ENCODE measurements at regions of chr15 and their contacts with region 1.

Region 1: GRCh38 chr15:70569091-70569621 is 194.2 kb downstream of the UACA start:
- DNase-seq: no peak
- ATAC-seq: peak; percentile 84

Region 2: DNA sequence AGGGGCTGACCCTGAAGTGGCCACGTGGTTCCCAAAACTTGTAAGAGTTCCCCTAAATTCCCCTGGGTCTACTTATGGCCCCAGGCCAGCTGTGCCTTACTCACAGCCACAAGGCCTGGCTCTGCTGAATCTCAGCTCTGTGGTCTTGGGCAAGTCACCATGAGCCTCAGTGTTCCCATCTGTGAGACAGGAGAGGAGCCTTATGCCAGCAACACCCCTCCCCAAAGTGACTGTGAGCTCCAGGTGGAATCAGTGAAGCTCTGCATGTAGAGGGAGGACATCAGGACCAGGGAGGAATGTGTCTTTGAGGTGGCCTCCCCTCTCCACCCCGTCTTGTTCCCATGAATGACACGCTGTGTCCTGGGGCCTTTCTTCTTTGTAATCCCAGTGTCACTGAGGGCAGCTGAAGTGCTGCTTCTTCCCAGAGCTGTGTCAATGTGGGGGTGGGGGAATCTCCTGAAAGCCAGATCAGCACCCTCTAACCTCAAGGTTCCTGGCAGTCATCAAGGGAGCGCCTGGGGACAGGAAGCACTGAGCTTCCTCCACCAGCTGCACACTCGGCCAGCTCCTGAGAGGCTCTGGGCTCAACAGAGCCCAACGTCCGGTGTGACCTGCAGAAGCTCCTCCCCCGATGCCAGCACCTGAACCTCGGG is 64.7 kb before region 1 on chr15:
- intact Hi-C with region 1: no loop called
- DNase-seq: peak; percentile 82
- ATAC-seq: peak; percentile 75

Region 3: DNA sequence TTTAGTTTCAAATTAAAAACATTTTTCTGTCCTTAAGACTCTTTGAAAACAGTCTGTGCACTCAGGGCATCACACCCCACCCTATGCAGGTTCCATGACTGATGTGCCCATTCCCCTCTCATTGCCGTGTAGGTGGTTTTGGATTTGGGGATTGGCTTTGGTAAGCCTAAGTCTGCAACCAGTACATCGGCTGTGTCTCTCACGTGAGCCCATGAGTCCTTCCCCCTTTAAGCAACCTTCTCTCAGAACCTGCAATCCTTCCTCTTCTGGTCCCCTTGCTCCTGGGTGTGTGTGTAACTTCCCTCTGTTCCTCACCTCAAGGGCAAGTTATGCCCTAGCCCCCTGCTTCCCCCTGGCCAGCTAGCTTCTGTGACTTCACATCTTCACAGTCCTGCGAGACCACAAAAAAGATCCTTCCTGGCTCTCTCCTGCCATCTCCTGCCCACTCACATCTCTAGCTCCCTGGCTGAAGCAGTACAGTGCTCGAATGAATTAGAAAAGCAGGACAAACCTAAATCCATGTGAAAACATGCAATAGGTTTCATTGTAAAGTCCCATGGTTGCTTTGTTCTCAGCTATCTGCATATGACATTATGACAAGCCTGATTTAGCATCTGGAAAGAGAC is 67.5 kb after region 1 on chr15:
- intact Hi-C with region 1: loop called (anchors 5 kb)
- DNase-seq: no peak
- ATAC-seq: no peak

Region 4: DNA sequence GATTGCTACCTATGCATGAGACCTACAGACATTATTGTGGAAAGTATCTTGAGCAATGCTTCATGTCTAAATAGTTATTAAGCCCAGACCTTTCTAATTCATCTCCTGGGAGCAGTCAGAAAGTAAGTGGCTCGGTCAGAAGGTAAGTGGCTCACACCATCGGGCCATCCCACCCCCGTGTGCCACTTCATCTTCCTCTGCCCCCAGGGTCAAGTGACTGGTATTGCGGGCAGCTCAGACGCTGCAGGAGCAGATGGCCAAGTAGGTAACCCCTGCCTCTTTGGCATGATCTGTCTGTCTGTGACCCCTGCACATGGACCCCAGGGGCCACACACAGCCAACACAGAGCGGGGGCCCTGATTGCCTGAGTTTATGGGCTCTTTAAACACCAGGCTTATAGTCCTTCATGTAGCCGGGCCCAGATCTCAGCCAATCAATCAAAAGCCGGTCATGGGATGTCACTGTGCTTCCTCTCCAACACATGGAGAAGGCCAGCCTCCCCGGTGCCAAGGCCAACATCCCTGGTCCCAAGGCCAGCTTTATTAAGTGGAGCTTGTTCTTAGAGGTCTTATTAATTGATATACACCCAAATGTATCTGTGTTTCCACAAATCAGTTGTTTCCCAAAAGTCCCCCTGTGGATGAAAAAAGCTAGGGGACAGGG is 241.9 kb after region 1 on chr15:
- intact Hi-C with region 1: loop called (anchors 2 kb)
- DNase-seq: no peak
- ATAC-seq: peak; percentile 29

Region 5: GRCh38 chr15:70823196-70823595 is 254.0 kb after region 1 on chr15:
- intact Hi-C with region 1: no loop called
- DNase-seq: no peak
- ATAC-seq: no peak